ENCODE measurements at regions of chr16 and their contacts with region 1.

Region 1: GRCh38 chr16:67028555-67029248 is at the start of gene CBFB:
- DNase-seq: peak; percentile 93 to 94 (median 93)
- H3K4me3 ChIP-seq: peak within 1 kb of the TSS; percentile 62 to 92 (median 68)
- H3K4me3 Mint-ChIP-seq: peak within 1 kb of the TSS; percentile 91 to 92
- H3K27ac ChIP-seq: peak within 1 kb of the TSS; percentile 86 to 98
- H3K27ac Mint-ChIP-seq: peak within 1 kb of the TSS; percentile 91 to 98 (median 96)
- H3K4me1 ChIP-seq: peaks cover 14 to 24% of the 10 kb centered on the region in 2 donors
- H3K4me1 Mint-ChIP-seq: peaks cover 27% of the 10 kb centered on the region
- H3K27me3 ChIP-seq: no peaks in the 10 kb centered on the region
- H3K27me3 Mint-ChIP-seq: no peaks in the 10 kb centered on the region
- CTCF ChIP-seq: no peak
- polyA plus RNA-seq, gene CBFB: 28.3 to 45.4 (median 29.5) TPM

Region 2: GRCh38 chr16:67084345-67085028 is 55.8 kb after region 1 on chr16:
- intact Hi-C with region 1: no loop called
- DNase-seq: peak in 1 of 3 donors; percentile 4
- H3K4me3 ChIP-seq: no peak overlapping the region
- H3K4me3 Mint-ChIP-seq: no peak overlapping the region
- H3K27ac ChIP-seq: peak overlapping the region in 1 of 2 donors; percentile 7
- H3K27ac Mint-ChIP-seq: peak overlapping the region in 1 of 7 donors; percentile 1
- H3K4me1 ChIP-seq: peaks cover 2 to 4% of the 10 kb centered on the region in 2 donors
- H3K4me1 Mint-ChIP-seq: peaks cover 6% of the 10 kb centered on the region
- H3K27me3 ChIP-seq: no peaks in the 10 kb centered on the region
- H3K27me3 Mint-ChIP-seq: no peaks in the 10 kb centered on the region
- CTCF ChIP-seq: no peak

Region 3: GRCh38 chr16:67109407-67110135 is 80.9 kb after region 1 on chr16 and contains the start of gene PHAF1:
- intact Hi-C with region 1: loop called in 1 of 2 experiments (anchors 10 kb)
- DNase-seq: peak; percentile 84 to 88 (median 86)
- H3K4me3 ChIP-seq: peak within 1 kb of the TSS; percentile 84 to 99 (median 99)
- H3K4me3 Mint-ChIP-seq: peak within 1 kb of the TSS; percentile 100
- H3K27ac ChIP-seq: peak within 1 kb of the TSS; percentile 98 to 99
- H3K27ac Mint-ChIP-seq: peak within 1 kb of the TSS; percentile 98 to 100 (median 99)
- H3K4me1 ChIP-seq: peaks cover 54 to 59% of the 10 kb centered on the region in 2 donors
- H3K4me1 Mint-ChIP-seq: peaks cover 62% of the 10 kb centered on the region
- H3K27me3 ChIP-seq: no peaks in the 10 kb centered on the region
- H3K27me3 Mint-ChIP-seq: no peaks in the 10 kb centered on the region
- CTCF ChIP-seq: no peak
- polyA plus RNA-seq, gene PHAF1: 18.8 to 68.2 (median 26.5) TPM

Region 4: DNA sequence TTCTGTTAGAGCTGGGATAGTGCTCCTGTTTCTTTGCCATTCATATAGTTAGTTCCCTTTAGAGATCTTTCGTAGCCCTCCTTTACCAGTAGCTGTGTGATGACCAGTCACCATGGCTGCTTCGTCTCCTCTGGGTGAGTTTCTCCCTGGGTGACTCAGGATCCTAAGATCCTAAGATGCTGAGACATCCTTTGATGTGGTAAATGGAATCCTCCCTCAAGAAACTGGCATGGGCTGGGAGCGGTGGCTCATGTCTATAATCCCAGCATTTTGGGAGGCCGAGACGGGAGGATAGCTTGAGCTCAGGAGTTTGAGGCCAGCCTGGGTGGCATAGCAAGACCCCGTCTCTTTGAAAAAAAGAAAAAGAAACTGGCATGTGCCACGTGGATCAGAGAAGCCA is 86.9 kb after region 1 on chr16:
- intact Hi-C with region 1: loop called in 1 of 2 experiments (anchors 5 kb)
- DNase-seq: peak; percentile 71 to 90 (median 85)
- H3K4me3 ChIP-seq: peak overlapping the region in 1 of 3 experiments; percentile 54
- H3K4me3 Mint-ChIP-seq: peak overlapping the region in 1 of 2 donors; percentile 5
- H3K27ac ChIP-seq: peak overlapping the region; percentile 56 to 96
- H3K27ac Mint-ChIP-seq: peak overlapping the region; percentile 90 to 97 (median 96)
- H3K4me1 ChIP-seq: peaks cover 64 to 66% of the 10 kb centered on the region in 2 donors
- H3K4me1 Mint-ChIP-seq: peaks cover 66% of the 10 kb centered on the region
- H3K27me3 ChIP-seq: no peaks in the 10 kb centered on the region
- H3K27me3 Mint-ChIP-seq: no peaks in the 10 kb centered on the region
- CTCF ChIP-seq: no peak

Region 5: DNA sequence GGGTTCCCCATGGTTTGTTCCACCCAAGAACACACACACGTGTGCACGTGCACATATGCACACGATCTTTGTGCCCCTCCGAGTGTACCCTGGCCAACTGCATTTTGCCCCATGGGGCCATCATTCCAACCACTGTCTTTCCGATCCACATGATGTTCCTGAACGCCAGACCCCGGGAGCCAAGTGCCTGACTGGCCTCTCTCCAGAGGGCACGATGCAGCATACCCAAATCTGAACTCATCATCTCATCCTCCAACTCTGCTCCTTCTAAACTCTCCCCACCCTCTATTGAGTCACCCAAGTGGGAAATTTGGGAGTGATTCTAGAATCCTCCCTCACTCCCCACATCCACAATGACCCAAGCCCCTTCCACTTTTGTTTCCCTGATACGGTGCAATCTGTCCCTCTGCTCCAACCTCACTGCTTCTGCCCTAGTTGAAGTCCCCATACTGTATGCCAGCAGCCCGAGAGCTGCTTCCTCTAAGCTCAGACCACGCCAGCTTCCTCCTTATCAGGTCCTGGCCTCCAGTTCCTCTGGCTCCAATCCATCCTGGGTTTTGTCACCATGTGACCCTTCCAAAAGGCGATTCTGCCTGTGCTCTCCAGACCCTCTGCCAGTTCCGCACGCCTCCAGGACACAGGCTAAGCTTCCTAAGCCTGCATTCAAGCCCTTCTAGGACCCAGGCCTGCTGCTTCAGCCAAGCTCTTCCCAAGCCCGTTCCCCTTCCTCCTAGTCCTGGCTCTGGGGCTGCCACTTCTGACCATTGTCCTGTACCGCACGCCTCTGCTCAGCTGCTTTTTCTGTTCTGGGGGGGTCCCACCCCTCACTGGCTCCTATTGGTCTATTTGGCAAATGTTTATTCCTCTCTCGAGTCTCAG is 188.1 kb after region 1 on chr16:
- intact Hi-C with region 1: no loop called
- DNase-seq: peak; percentile 44 to 62 (median 50)
- H3K4me3 ChIP-seq: peak overlapping the region in 1 of 3 experiments; percentile 28
- H3K4me3 Mint-ChIP-seq: peak overlapping the region; percentile 18 to 80
- H3K27ac ChIP-seq: peak overlapping the region; percentile 13 to 14
- H3K27ac Mint-ChIP-seq: peak overlapping the region in 5 of 7 donors; percentile 62 to 86 (median 75)
- H3K4me1 ChIP-seq: peaks cover 19 to 21% of the 10 kb centered on the region in 2 donors
- H3K4me1 Mint-ChIP-seq: peaks cover 32% of the 10 kb centered on the region
- H3K27me3 ChIP-seq: no peaks in the 10 kb centered on the region
- H3K27me3 Mint-ChIP-seq: peaks cover 0 to 6% (median 3%) of the 10 kb centered on the region in 3 donors
- CTCF ChIP-seq: no peak

Region 6: DNA sequence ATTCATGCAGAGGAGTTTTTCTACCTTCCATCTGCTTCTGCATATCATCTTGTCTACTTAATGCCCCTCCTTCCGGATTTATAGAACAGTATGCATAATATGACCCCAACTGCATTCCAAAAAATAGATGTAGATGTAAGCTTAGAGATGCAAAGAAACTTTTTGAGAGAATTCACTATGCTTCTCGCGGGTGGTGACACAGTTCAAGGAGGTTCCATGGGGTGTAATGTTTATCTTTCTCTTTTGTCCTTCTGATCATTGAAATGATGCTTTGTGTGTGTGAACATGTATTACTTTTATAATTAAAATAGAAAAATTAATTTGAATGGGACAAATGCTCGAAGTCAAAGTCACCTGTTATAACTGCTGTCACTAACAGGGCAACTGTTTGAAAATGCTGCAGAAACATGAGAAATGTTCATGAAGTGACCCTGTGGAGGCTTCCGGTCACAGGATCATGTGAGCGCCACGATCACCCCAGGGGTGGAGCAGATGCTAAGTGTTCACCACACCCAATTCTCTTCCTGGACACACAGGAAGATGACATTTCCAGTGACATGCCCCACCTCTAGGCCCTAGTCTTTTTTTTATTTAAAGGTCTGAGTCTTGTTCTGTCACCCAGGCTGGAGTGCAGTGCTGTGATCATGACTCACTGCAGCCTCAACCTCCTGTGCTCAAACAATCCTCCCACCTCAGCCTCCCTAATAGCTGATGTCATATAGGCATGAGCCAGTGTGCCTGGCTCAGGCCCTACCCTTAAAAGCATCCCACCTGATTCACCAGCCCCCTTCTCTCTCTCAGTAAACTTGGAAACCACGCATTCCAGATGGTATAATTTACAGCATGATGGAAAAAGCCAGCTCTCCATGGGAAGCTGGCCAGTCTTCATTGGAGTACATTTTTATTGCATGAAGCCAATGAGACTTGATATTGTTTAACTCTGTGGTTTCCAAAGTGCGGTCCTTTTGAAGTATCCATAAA is 475.6 kb after region 1 on chr16:
- intact Hi-C with region 1: no loop called
- DNase-seq: peak; percentile 95 to 97 (median 95)
- H3K4me3 ChIP-seq: peak overlapping the region in 1 of 3 experiments; percentile 9
- H3K4me3 Mint-ChIP-seq: no peak overlapping the region
- H3K27ac ChIP-seq: peak overlapping the region; percentile 92 to 99
- H3K27ac Mint-ChIP-seq: peak overlapping the region; percentile 96 to 99 (median 98)
- H3K4me1 ChIP-seq: peaks cover 50 to 51% of the 10 kb centered on the region in 2 donors
- H3K4me1 Mint-ChIP-seq: peaks cover 52% of the 10 kb centered on the region
- H3K27me3 ChIP-seq: no peaks in the 10 kb centered on the region
- H3K27me3 Mint-ChIP-seq: peaks cover 0 to 5% (median 3%) of the 10 kb centered on the region in 3 donors
- CTCF ChIP-seq: no peak